Panc1 (cell line): ENCODE measurements at regions of chr3 and their contacts with region 1.

Region 1: GRCh38 chr3:128503164-128503651 is 10.2 kb upstream of the GATA2 start:
- DNase-seq: no peak
- ATAC-seq: peak; percentile 60
- H3K4me3 ChIP-seq: no peak overlapping the region
- H3K27ac ChIP-seq: no peak overlapping the region
- H3K4me1 ChIP-seq: peaks cover under 1% of the 10 kb centered on the region; the same call in 1 of the 2 replicates
- H3K27me3 ChIP-seq: peaks cover 3% of the 10 kb centered on the region; the same call in 1 of the 2 replicates
- CTCF ChIP-seq: peak; percentile 74

Region 2: GRCh38 chr3:128170805-128171516 is 332.2 kb before region 1 on chr3:
- CTCF ChIA-PET with region 1: no interaction called
- POLR2A ChIA-PET with region 1: no interaction called
- in situ Hi-C with region 1: no loop called
- intact Hi-C with region 1: loop called (anchors 5 kb)
- DNase-seq: peak; percentile 36
- ATAC-seq: peak; percentile 93
- H3K4me3 ChIP-seq: no peak overlapping the region
- H3K27ac ChIP-seq: no peak overlapping the region; the same call in 1 of the 2 replicates
- H3K4me1 ChIP-seq: peaks cover 13% of the 10 kb centered on the region
- H3K27me3 ChIP-seq: no peaks in the 10 kb centered on the region
- CTCF ChIP-seq: peak; percentile 90

Region 3: DNA sequence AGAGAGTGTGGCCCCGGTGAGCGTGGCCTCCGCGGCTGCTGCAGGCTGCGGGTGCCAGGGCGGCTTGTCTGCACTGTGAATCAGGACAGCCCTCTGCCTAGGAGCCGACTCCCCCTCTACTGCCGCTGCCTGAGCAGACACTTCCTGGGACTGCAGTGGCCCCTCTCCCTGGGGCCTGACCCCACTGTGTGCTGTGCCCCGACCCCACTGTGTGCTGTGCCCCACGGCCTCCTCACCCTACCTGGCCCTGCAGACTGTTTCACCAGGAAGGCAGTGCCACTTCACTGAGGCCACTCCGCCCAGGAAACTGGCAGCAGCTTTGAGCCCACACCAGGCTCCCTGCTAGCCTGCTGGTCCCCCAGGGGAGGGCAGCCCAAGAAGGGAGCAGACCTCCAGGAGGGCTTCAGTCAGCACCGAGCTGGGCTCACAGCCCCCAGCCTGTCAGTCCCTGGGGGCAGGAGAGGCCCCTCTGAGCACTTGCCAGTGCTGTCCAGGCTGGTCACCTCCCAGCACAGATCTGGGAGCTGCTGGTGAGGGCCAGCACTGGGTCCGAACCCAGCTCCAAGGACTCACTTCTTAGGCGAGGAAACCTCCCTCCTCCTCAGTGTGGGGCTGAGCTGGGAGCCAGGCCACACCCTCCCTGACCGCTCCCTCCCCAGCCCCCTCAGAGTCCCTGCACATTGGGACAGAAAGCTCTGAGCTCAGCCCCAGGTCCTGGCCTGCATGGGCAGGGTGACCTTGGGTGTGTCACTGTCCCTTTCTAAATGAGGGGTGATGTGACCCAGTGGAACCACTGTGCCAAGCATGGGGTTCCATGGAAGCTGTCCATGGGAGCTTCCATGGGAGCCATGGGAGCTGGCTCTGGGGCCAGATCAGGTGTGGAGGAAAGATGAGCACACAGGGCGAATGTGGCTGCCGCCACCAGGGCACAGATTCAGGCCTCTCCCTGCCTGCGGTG is 93.3 kb before region 1 on chr3:
- CTCF ChIA-PET with region 1: no interaction called
- POLR2A ChIA-PET with region 1: interaction called, 11 read pairs
- in situ Hi-C with region 1: no loop called
- intact Hi-C with region 1: no loop called
- DNase-seq: no peak
- ATAC-seq: 0 out of 2 replicates have a peak, but pooled peaks have one; percentile 13
- H3K4me3 ChIP-seq: no peak overlapping the region
- H3K27ac ChIP-seq: peak overlapping the region; percentile 23; the same call in 1 of the 2 replicates
- H3K4me1 ChIP-seq: peaks cover 29% of the 10 kb centered on the region
- H3K27me3 ChIP-seq: no peaks in the 10 kb centered on the region
- CTCF ChIP-seq: no peak

Region 4: DNA sequence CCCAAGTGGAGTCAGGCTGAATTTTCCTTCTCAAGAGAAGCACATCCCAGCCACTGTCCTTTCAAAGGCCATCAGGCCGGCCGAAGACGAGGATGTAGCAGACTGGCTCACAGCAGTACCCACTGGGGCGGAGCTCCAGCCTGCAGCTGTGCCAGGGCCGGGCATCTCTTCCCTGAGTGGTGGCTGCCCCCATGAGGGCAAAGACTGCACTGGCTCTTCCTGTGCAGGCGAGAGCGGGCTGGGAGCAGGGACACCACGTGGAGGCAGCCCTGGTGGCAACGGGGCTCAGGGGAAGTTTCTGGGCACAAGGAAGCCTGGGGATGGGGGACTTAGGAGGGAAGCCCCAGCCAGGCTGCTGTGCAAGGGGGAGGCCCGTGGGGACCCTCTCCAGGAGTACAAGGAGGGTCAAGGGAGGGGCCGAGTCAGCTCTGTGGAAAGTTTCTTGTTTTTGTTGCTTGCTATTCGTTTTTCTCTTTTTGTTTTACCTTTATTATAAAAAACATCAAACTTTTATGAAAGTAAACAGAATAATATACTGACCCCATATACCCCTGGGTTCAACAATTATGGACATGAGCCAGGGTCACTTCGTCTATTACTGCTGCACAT is 81.3 kb after region 1 on chr3:
- CTCF ChIA-PET with region 1: no interaction called
- POLR2A ChIA-PET with region 1: no interaction called
- in situ Hi-C with region 1: no loop called
- intact Hi-C with region 1: loop called (anchors 5 kb)
- DNase-seq: no peak
- ATAC-seq: peak; percentile 100
- H3K4me3 ChIP-seq: peak overlapping the region in 1 of 2 experiments; percentile 29; a peak in 1 of 4 replicates
- H3K27ac ChIP-seq: peak overlapping the region; percentile 31; the same call in 1 of the 2 replicates
- H3K4me1 ChIP-seq: peaks cover 7% of the 10 kb centered on the region; the same call in 1 of the 2 replicates
- H3K27me3 ChIP-seq: no peaks in the 10 kb centered on the region
- CTCF ChIP-seq: peak; percentile 95

Region 5: DNA sequence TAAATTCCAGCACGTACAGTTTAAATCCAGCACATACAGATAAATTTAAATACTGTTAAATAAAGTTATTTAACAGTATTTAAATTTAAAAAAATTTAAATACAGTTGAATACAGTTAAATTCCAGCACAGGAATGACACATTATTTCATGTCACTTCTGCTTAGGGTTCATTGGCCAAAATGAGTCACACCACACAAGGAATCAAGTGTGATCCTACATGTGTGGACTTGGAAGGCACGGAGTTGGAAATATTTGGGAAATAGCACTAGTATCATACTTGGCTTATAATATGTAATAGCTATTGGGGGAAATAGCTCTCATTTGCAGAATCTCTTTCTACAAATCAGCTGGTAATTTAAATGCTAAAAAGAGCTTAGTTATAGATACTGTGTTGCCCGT is 233.4 kb after region 1 on chr3:
- CTCF ChIA-PET with region 1: no interaction called
- POLR2A ChIA-PET with region 1: no interaction called
- in situ Hi-C with region 1: no loop called
- intact Hi-C with region 1: no loop called
- DNase-seq: no peak
- ATAC-seq: no peak
- H3K4me3 ChIP-seq: no peak overlapping the region
- H3K27ac ChIP-seq: no peak overlapping the region
- H3K4me1 ChIP-seq: peaks cover 16% of the 10 kb centered on the region
- H3K27me3 ChIP-seq: no peaks in the 10 kb centered on the region
- CTCF ChIP-seq: no peak